Activated CD8-positive, alpha-beta T cell treated with anti-CD3 and anti-CD28 coated beads for 36 hours (primary cell): ENCODE measurements at regions of chr12 and their contacts with region 1.

Region 1: DNA sequence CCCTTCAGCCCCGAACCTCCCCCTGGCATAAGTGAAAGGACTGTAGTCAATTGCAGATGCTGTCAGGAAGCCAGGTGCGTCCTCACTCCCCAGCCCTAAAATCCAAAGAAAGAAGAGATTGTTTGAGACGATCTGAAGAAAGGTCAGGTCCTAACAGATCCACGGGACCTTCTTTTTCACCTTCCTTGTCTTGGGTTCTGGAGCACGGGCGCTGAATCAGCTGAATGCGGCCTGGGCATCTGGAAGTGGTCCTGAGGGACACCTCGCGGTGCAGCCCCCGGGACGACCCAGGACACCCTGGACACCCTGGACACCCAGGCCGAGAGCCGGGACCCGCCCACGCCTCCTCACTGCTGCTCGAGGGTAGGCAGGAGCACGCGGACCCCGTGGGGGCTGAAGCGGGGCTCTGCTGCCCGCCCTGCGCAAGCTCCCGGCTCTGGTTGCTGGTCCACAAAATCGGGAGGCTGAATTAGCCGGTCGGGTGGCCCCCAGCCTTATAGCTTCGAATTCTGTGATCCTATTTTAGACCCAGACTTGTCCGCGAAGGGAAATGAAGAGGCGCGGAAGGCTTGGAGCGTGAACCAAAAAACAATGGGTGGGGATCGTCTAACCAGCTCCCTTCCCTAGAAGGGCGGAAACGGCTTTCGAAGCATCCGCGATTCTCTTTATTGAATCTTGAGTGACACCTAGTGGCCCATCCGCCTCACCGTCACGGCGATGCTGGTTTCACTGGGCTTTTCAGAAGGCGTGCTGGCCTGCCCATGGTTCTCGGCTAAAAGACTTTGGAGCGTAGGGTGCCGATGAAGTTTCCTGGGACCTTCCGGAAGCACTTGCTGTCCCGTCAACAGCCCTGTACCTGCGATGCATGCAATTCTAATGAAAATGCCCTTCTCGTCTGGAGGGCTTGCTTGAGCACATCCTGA is 46.4 kb upstream of the PLXNC1 start:
- DNase-seq: peak; percentile 93
- ATAC-seq: peak; percentile 81
- H3K4me3 Mint-ChIP-seq: peak overlapping the region; percentile 77
- H3K27ac Mint-ChIP-seq: peak overlapping the region; percentile 75
- H3K4me1 Mint-ChIP-seq: peaks cover 18% of the 10 kb centered on the region
- H3K27me3 Mint-ChIP-seq: peaks cover 15% of the 10 kb centered on the region
- CTCF ChIP-seq: peak; percentile 72

Region 2: GRCh38 chr12:92987362-92987761 is 1114.6 kb before region 1 on chr12:
- CTCF ChIA-PET with region 1: interaction called, 39 read pairs
- POLR2A ChIA-PET with region 1: interaction called, 5 read pairs
- intact Hi-C with region 1: no loop called
- DNase-seq: peak; percentile 14
- ATAC-seq: no peak
- H3K4me3 Mint-ChIP-seq: no peak overlapping the region
- H3K27ac Mint-ChIP-seq: peak overlapping the region; percentile 78
- H3K4me1 Mint-ChIP-seq: peaks cover 37% of the 10 kb centered on the region
- H3K27me3 Mint-ChIP-seq: peaks cover 1% of the 10 kb centered on the region
- CTCF ChIP-seq: peak; percentile 81

Region 3: GRCh38 chr12:93514853-93515252 is 587.1 kb before region 1 on chr12:
- CTCF ChIA-PET with region 1: interaction called, 53 read pairs
- POLR2A ChIA-PET with region 1: no interaction called
- intact Hi-C with region 1: no loop called
- DNase-seq: no peak
- ATAC-seq: no peak
- H3K4me3 Mint-ChIP-seq: no peak overlapping the region
- H3K27ac Mint-ChIP-seq: no peak overlapping the region
- H3K4me1 Mint-ChIP-seq: no peaks in the 10 kb centered on the region
- H3K27me3 Mint-ChIP-seq: no peaks in the 10 kb centered on the region
- CTCF ChIP-seq: no peak

Region 4: GRCh38 chr12:93670104-93670503 is 431.9 kb before region 1 on chr12:
- CTCF ChIA-PET with region 1: interaction called, 10 read pairs
- POLR2A ChIA-PET with region 1: no interaction called
- intact Hi-C with region 1: no loop called
- DNase-seq: no peak
- ATAC-seq: no peak
- H3K4me3 Mint-ChIP-seq: no peak overlapping the region
- H3K27ac Mint-ChIP-seq: no peak overlapping the region
- H3K4me1 Mint-ChIP-seq: peaks cover 15% of the 10 kb centered on the region
- H3K27me3 Mint-ChIP-seq: peaks cover 10% of the 10 kb centered on the region
- CTCF ChIP-seq: no peak

Region 5: GRCh38 chr12:93773122-93773871 is 328.7 kb before region 1 on chr12:
- CTCF ChIA-PET with region 1: interaction called, 152 read pairs
- POLR2A ChIA-PET with region 1: interaction called, 3 read pairs
- intact Hi-C with region 1: loop called (anchors 5 kb)
- DNase-seq: peak; percentile 72
- ATAC-seq: peak; percentile 91
- H3K4me3 Mint-ChIP-seq: peak overlapping the region; percentile 35
- H3K27ac Mint-ChIP-seq: peak overlapping the region; percentile 63
- H3K4me1 Mint-ChIP-seq: peaks cover 38% of the 10 kb centered on the region
- H3K27me3 Mint-ChIP-seq: no peaks in the 10 kb centered on the region
- CTCF ChIP-seq: no peak

Region 6: DNA sequence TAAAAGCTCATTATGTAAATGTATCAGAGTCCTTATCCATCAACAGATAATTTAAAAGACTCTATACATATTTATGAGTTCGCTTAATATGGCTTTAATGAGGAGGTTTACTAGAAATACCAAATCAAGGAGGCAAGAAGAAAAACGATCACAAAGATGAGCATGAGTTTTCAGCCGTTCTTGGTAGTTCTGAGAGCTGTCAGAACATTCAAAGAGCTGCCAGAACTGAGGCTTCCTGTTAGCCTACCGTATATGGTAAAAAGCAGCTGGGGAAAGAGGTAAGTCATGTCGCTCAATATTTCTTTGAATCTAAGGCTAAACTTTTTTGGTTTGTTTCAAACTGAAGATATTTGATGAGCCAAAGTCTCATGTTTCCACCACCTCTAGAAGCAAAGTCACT is 68.9 kb before region 1 on chr12:
- CTCF ChIA-PET with region 1: interaction called, 20 read pairs
- POLR2A ChIA-PET with region 1: no interaction called
- intact Hi-C with region 1: no loop called
- DNase-seq: no peak
- ATAC-seq: peak; percentile 71
- H3K4me3 Mint-ChIP-seq: no peak overlapping the region
- H3K27ac Mint-ChIP-seq: no peak overlapping the region
- H3K4me1 Mint-ChIP-seq: peaks cover 34% of the 10 kb centered on the region
- H3K27me3 Mint-ChIP-seq: peaks cover 2% of the 10 kb centered on the region
- CTCF ChIP-seq: no peak

Region 7: DNA sequence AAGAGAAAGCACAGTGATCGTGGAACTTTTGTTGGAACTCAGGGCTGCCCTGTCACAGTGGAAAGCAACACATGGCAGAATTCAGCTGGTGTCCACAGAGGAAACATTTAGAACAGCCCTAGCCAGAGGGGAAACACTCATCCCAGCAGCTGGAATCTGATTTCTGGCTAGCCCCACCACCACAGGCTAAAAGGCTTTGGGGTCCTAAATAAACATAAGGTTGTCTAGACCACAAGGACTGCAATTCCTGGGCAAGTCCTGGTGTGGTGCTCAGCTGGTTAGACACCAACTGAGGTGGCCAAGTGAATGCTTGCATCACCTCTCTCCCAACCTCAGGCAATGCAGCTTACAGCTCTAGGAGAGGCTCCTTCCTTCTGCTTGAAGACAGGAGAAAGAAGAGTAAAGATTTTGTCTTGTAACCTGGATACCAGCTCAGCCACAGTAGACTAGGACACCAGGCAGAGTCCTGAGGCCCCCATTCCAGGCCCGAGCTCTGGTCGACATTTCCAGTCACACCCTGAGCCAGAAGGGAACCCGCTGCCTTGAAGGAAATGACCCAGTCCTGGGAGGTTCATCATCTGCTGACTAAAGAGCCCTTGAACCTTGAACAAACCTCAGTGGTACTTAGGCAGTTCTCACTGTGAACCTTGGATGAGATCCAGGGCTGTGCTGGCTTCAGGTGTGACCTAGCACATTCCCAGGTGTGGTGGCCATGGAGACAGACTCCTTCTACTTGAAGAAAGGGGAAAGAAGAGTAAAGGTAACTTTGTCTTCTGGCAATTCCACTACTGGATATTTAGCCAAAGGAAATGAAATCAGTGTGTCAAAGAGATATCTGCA is 39.0 kb before region 1 on chr12:
- CTCF ChIA-PET with region 1: no interaction called
- POLR2A ChIA-PET with region 1: no interaction called
- intact Hi-C with region 1: no loop called
- DNase-seq: no peak
- ATAC-seq: no peak
- H3K4me3 Mint-ChIP-seq: no peak overlapping the region
- H3K27ac Mint-ChIP-seq: no peak overlapping the region
- H3K4me1 Mint-ChIP-seq: no peaks in the 10 kb centered on the region
- H3K27me3 Mint-ChIP-seq: no peaks in the 10 kb centered on the region
- CTCF ChIP-seq: no peak

Region 8: DNA sequence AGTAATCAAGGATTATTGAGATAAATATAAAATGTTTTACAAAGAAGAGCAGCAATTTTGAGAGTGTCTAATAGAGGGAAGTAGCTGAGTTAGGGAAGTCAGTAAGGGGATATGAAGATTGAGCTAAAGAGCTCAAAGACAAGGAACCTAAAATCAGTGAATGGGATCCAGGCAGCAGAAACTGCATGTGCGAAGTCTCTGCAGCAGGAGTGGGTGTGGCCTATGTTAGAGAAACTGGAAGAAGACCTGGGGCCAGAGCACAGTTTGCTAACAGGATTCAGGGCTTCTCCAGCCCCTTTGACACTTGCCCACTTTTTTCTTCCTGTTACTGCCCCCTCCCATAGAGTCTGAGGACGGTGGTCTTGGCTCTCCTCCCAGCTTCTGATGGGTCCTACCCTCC is 10.1 kb after region 1 on chr12:
- CTCF ChIA-PET with region 1: interaction called, 43 read pairs
- POLR2A ChIA-PET with region 1: interaction called, 8 read pairs
- intact Hi-C with region 1: no loop called
- DNase-seq: no peak
- ATAC-seq: no peak
- H3K4me3 Mint-ChIP-seq: no peak overlapping the region
- H3K27ac Mint-ChIP-seq: no peak overlapping the region
- H3K4me1 Mint-ChIP-seq: peaks cover 29% of the 10 kb centered on the region
- H3K27me3 Mint-ChIP-seq: no peaks in the 10 kb centered on the region
- CTCF ChIP-seq: no peak